MCF 10A (cell line): ENCODE measurements at regions of chr4 and their contacts with region 1.

Region 1: DNA sequence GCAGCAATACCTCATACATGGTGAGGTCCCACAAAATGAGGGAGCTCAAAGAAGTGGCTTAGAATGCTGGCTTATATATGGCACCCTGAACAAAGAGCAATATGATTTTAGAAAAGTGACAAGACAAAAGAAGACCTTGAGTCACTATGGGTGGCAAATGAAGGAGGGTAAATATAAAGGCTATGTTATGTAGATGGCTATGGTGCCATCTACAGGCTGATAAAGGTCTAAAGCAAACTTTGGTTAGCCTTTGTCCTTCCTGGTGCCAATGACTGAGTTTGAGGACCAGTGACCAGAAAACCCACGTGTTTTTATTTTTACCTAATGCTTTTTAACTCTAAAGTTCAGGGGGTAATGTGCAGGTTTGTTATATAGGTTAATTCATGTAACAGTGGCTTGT is 151.8 kb downstream of the CCNG2 start:
- DNase-seq: peak; percentile 62
- H3K4me3 Mint-ChIP-seq: no peak overlapping the region
- H3K27ac Mint-ChIP-seq: no peak overlapping the region
- H3K4me1 Mint-ChIP-seq: peaks cover 7% of the 10 kb centered on the region
- H3K27me3 Mint-ChIP-seq: no peaks in the 10 kb centered on the region
- CTCF ChIP-seq: peak; percentile 52

Region 2: GRCh38 chr4:77226939-77227705 is 81.7 kb before region 1 on chr4:
- CTCF ChIA-PET with region 1: interaction called, 10 read pairs
- POLR2A ChIA-PET with region 1: no interaction called
- intact Hi-C with region 1: no loop called
- DNase-seq: no peak
- H3K4me3 Mint-ChIP-seq: no peak overlapping the region
- H3K27ac Mint-ChIP-seq: no peak overlapping the region
- H3K4me1 Mint-ChIP-seq: peaks cover 8% of the 10 kb centered on the region
- H3K27me3 Mint-ChIP-seq: no peaks in the 10 kb centered on the region
- CTCF ChIP-seq: no peak

Region 3: GRCh38 chr4:77251751-77252150 is 57.1 kb before region 1 on chr4:
- CTCF ChIA-PET with region 1: interaction called, 243 read pairs
- POLR2A ChIA-PET with region 1: no interaction called
- intact Hi-C with region 1: no loop called
- DNase-seq: no peak
- H3K4me3 Mint-ChIP-seq: no peak overlapping the region
- H3K27ac Mint-ChIP-seq: no peak overlapping the region
- H3K4me1 Mint-ChIP-seq: peaks cover 6% of the 10 kb centered on the region
- H3K27me3 Mint-ChIP-seq: no peaks in the 10 kb centered on the region
- CTCF ChIP-seq: no peak

Region 4: DNA sequence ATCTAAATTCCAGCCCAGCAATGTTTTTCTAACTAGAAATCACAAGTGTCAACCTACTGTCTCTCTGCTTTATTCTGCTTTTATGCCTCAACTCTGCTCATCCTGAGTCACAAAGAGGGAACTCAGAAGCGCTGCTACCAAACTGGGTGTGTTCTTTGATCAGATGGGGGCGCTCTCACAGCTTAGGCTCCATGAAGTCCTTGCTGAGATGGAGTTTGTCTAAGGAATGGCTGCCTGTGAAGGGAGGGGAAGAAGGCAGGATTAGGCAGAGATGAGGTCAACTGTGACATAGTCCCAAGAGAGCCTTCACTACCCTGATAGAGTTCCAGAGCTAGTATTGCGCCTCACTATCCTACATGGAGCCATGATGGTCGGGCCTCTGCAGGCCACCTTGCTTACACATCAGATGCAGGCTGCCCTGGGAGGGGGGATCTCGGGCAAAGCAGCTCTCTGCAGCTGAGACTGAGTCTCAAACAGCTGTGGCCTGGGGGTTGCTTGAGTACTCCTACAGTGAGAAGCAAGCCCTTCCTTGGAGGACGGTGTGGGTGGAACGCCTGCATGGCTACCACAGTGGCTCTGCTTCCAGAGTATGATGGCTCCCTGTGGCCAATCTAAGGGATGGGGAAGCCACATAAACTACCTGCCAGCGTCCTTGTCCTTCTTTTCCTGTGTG is 68.1 kb after region 1 on chr4:
- CTCF ChIA-PET with region 1: no interaction called
- POLR2A ChIA-PET with region 1: no interaction called
- intact Hi-C with region 1: no loop called
- DNase-seq: no peak
- H3K4me3 Mint-ChIP-seq: no peak overlapping the region
- H3K27ac Mint-ChIP-seq: no peak overlapping the region
- H3K4me1 Mint-ChIP-seq: no peaks in the 10 kb centered on the region
- H3K27me3 Mint-ChIP-seq: peaks cover 11% of the 10 kb centered on the region
- CTCF ChIP-seq: no peak

Region 5: GRCh38 chr4:77398261-77398660 is 89.4 kb after region 1 on chr4:
- CTCF ChIA-PET with region 1: no interaction called
- POLR2A ChIA-PET with region 1: no interaction called
- intact Hi-C with region 1: no loop called
- DNase-seq: no peak
- H3K4me3 Mint-ChIP-seq: no peak overlapping the region
- H3K27ac Mint-ChIP-seq: no peak overlapping the region
- H3K4me1 Mint-ChIP-seq: no peaks in the 10 kb centered on the region
- H3K27me3 Mint-ChIP-seq: no peaks in the 10 kb centered on the region
- CTCF ChIP-seq: no peak